ENCODE measurements at regions of chr12 and their contacts with region 1.

Region 1: DNA sequence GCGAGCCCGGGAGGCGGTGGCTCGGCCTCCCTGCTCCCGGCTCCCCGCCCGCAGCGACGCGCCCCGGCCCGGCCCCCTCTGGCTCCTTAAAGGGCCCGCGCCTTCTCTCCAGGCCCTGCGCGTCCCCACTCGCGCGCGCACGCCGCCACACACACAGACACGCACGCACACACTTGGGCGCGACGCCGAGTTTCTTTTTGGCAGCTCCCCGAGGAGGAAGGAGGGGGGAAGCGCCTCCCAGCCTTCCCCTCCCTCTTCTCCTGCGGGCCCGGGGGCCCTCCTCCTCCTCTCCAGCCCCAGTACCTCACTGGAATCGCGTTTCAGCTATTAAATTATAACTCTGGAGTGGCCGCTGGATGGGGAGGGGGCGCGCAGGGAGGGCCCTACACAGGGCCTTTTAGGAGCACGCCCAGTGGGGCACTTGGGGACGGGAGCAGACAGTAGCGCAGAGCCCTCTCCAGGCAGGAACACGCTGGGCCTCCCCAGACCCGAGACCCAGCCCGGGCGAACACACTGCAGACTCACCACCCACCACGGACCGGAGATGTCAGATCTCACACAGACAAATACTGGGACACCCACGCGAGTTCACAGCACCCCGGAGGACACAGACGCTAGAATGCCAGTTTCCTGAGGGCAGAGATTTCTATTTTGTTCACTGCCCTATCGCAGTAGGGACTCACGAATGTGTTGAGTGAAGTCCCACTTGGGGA is 405 bp upstream of the NCOR2 start:
- DNase-seq: peak; percentile 84 to 95 (median 94)
- ATAC-seq: peak; percentile 86
- H3K4me3 ChIP-seq: peak overlapping the region; percentile 42
- H3K27ac ChIP-seq: peak overlapping the region; percentile 69
- H3K4me1 ChIP-seq: peaks cover 13 to 54% of the 10 kb centered on the region in 2 experiments
- H3K27me3 ChIP-seq: no peaks in the 10 kb centered on the region
- CTCF ChIP-seq: 0 out of 6 replicates have a peak, but pooled peaks of 1 of the 3 experiments have one; percentile 9
- EP300 ChIP-seq: no peak
- POLR2A ChIP-seq: no peak
- RAD21 ChIP-seq: peak in 1 of 2 experiments; percentile 30; a peak in 1 of 4 replicates

Region 2: DNA sequence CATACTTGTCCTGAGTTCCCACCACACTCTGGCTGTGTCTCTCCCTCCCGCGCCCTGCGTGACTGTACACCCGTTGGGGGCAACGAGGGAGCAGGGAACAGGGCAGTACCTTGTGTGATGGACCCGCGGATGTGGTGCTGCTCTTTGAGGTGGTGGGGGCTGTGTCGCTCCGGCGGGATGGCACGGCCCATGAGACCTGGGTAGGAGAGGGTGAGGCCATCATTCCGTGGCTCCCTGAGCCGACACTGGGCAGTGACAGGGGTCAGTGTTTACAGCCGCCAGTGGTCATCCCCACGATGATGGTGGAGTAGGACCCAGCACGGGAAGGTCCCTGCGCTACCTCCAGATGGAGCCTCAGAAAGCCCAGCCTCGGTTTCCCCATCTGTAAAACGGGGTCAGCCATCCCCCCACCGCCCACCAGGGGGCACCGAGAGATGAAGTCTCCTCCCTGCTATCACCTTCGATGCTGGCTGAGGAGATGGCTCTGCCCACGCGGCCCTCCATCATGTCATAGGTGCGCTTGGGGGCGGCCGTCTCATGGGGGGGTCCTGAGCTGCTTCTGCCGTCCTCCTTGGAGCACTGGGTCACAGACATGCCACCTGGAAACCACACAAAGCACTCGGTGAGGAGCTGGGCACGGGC is 220.0 kb before region 1 on chr12:
- CTCF ChIA-PET with region 1: no interaction called
- POLR2A ChIA-PET with region 1: no interaction called
- in situ Hi-C with region 1: no loop called
- intact Hi-C with region 1: no loop called
- DNase-seq: peak; percentile 12 to 51 (median 41)
- ATAC-seq: peak; percentile 32; the same call in 2 of the 3 replicates
- H3K4me3 ChIP-seq: no peak overlapping the region
- H3K27ac ChIP-seq: no peak overlapping the region
- H3K4me1 ChIP-seq: peaks cover 3 to 4% of the 10 kb centered on the region in 2 experiments
- H3K27me3 ChIP-seq: no peaks in the 10 kb centered on the region
- CTCF ChIP-seq: peak; percentile 52 to 71 (median 53)
- EP300 ChIP-seq: no peak
- POLR2A ChIP-seq: no peak
- RAD21 ChIP-seq: peak in 1 of 2 experiments; percentile 59; a peak in 2 of 4 replicates

Region 3: GRCh38 chr12:124493809-124494750 is 73.7 kb before region 1 on chr12:
- CTCF ChIA-PET with region 1: no interaction called
- POLR2A ChIA-PET with region 1: no interaction called
- in situ Hi-C with region 1: no loop called
- intact Hi-C with region 1: loop called (anchors 5 kb)
- DNase-seq: peak in 1 of 4 experiments; percentile 20
- ATAC-seq: no peak
- H3K4me3 ChIP-seq: no peak overlapping the region
- H3K27ac ChIP-seq: no peak overlapping the region
- H3K4me1 ChIP-seq: peaks cover 29 to 70% of the 10 kb centered on the region in 2 experiments
- H3K27me3 ChIP-seq: no peaks in the 10 kb centered on the region
- CTCF ChIP-seq: no peak
- EP300 ChIP-seq: no peak
- POLR2A ChIP-seq: no peak
- RAD21 ChIP-seq: no peak

Region 4: DNA sequence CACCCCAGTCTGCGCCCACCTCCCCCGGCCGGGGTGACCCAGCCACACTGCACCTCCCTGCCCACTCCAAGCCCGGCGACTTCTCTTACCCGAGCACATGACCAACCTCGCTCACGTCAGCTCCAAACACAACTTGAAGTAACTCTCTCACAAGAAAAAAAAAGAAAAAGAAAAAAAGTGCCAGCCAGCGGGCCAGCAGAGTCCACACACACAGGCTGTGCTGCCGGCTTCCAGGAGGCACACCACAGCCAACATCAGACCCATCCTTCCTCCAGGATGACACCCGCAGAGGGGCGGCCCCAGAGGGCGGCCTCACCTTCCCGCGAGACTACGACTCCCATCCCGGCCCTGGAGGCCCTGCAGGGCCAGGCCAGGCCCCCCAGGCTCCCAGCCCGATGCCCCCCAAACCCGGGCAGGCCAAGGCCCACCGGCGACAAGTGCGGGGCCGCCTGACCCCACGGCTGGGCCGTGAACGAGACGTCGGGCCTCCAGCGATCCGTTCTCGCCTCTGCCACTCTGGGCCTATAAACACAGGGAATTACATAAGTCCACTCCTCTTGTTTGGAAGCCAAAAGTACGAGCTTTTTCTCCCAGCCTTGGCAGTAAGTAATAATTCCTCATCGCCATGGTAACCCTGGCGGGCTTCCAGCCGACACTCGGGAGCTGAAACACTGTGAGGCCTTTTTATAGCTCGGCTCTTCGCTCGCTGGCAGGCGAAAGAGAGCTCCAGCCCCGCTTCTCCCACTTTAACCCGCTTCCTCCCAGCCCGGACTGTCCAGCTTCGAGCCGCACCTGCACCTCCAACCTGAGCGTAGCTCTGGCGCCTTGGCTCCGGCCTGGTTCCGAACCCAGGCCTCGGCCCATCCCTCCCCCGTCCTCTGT is 49.5 kb before region 1 on chr12:
- CTCF ChIA-PET with region 1: no interaction called
- POLR2A ChIA-PET with region 1: no interaction called
- in situ Hi-C with region 1: no loop called
- intact Hi-C with region 1: no loop called
- DNase-seq: peak in 1 of 4 experiments; percentile 57
- ATAC-seq: peak; percentile 44
- H3K4me3 ChIP-seq: no peak overlapping the region
- H3K27ac ChIP-seq: peak overlapping the region; percentile 59; the same call in 2 of the 3 replicates
- H3K4me1 ChIP-seq: peaks cover 19 to 58% of the 10 kb centered on the region in 2 experiments
- H3K27me3 ChIP-seq: no peaks in the 10 kb centered on the region
- CTCF ChIP-seq: no peak
- EP300 ChIP-seq: no peak
- POLR2A ChIP-seq: no peak
- RAD21 ChIP-seq: no peak

Region 5: DNA sequence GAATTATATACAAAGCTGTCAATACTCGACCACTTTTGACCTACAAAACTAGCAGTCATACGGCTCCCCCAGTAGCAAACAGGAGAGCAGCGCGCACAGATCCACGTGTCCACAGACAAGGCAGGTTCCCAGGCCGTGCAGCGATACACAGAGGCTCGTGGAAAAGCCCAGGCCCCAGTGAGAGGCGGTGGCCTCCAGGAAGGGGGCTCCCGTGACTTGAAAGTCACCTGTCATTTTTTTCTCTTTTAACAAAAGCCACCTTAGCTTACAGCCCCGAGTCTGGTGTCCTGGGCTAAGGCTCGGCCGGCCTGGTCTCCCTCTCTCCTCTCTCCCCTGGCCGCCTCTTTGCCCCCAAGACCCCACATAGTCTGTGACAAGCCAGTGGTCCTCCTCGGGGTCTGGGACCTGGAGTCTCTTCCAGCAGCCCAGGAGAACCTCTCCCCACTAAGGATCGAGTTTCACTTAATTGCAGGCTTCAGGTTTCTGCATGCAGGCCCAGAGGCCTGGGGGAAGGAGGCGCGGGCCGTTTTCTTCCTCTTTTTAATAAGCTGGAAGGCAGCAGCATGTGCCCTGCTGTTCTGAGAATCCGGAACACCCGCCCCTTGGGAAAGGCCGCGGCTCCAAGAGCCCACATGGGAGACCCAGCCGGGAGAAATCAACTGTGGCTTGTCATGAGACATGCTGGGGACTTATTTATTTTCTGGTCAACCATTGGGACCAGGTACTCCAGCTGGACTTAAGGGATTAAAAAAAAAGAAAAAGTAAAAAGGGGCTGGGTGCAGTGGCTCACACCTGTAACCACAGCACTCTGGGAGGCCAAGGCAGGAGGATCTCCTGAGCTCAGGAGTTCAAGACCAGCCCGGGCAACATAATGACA is 16.3 kb before region 1 on chr12:
- CTCF ChIA-PET with region 1: no interaction called
- POLR2A ChIA-PET with region 1: interaction called, 15 read pairs
- in situ Hi-C with region 1: no loop called
- intact Hi-C with region 1: no loop called
- DNase-seq: peak in 2 of 4 experiments; percentile 54 to 79
- ATAC-seq: peak; percentile 79
- H3K4me3 ChIP-seq: no peak overlapping the region
- H3K27ac ChIP-seq: peak overlapping the region; percentile 67
- H3K4me1 ChIP-seq: peaks cover 40 to 69% of the 10 kb centered on the region in 2 experiments
- H3K27me3 ChIP-seq: no peaks in the 10 kb centered on the region
- CTCF ChIP-seq: no peak
- EP300 ChIP-seq: no peak
- POLR2A ChIP-seq: no peak
- RAD21 ChIP-seq: no peak

Region 6: DNA sequence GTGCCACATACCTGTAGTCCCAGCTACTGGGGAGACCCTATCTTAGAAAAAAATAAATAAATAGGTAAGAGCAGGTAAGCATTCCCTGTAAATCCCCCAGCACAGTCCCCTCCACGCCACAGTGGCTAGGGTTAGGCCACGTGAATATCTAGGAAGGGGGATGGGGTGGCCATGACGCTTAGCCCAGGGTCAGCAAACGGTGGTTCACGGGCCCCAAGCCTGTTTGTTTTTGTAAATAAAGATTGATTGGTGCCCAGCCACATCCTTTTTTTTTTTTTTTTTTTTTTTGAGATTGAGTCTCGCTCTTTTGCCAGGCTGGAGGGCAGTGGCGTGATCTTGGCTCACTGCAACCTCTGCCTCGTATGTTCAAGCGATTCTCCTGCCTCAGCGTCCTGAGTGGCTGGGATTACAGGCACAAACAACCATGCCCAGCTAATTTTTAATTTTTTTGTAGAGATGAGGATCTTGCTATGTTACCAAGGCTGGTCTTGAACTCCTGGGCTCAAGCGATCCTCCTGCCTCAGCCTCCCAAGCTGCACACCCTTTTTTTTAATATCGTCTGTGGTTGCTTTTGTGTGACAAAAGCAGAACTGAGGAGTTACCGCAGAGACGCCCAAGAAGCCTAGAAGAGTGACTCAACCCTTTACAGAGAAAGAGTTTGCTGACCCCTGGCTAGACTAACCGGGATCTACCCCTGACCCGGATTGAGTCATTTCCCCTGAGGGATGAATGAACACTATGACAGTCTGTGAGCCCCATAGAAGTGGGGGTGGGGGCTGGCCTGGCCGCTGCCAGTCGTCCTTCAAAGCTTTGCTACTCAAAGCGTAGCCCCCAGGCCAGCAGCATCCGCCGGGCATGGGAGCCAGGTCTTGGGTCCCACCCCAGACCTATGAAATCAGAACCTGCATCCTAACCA is 113.3 kb after region 1 on chr12:
- CTCF ChIA-PET with region 1: interaction called, 9 read pairs
- POLR2A ChIA-PET with region 1: interaction called, 3 read pairs
- in situ Hi-C with region 1: no loop called
- intact Hi-C with region 1: loop called (anchors 2 kb)
- DNase-seq: peak; percentile 63 to 79 (median 70)
- ATAC-seq: peak; percentile 94
- H3K4me3 ChIP-seq: no peak overlapping the region
- H3K27ac ChIP-seq: no peak overlapping the region
- H3K4me1 ChIP-seq: peaks cover 20 to 48% of the 10 kb centered on the region in 2 experiments
- H3K27me3 ChIP-seq: peaks cover 0 to 19% of the 10 kb centered on the region in 2 experiments; a peak in 1 of 5 replicates
- CTCF ChIP-seq: peak; percentile 69 to 78 (median 71)
- EP300 ChIP-seq: 0 out of 2 replicates have a peak, but pooled peaks have one; percentile 11
- POLR2A ChIP-seq: no peak
- RAD21 ChIP-seq: peak; percentile 83 to 88

Region 7: DNA sequence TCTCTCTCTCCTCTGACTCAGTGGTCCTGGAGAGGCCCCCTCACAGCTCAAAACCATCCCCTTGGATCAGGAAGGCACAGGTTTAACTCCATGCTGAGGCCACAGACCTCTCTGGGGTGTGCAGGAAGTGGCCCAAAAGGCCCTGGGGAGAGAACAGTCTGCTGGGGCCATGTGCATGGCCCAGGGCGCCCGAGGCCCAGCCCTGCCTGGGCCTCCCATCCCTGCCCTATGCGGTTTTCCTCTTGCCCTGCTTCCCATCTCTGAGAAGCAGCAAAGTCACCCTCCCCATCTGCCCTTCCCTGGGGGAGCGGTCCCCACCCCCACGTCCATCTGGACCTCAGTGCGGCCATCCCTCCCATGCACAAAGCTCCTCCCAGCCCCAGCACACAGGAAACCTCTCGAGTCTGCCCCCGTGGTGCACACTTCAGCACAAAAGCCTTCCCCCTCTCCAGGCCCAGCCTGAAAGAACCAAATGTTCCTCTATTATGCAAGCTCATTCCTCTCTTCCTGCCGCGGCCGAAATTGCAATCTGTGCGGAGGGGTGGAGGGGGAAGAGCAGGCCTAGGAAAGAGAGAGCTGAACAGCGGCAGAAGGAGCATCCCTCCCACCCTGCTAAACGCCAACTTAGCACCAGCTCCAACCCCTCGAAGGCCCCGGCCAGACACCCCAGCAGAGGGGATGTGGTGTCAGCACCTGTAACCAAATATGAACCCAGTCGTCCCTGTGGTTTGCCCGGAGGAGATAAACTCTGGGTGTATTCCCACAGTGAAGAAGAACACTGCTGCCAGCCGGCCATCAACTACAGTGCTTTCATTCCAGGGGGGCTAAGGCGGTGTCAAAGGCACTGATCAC is 187.4 kb after region 1 on chr12:
- CTCF ChIA-PET with region 1: no interaction called
- POLR2A ChIA-PET with region 1: no interaction called
- in situ Hi-C with region 1: no loop called
- intact Hi-C with region 1: loop called (anchors 5 kb)
- DNase-seq: no peak
- ATAC-seq: peak; percentile 22; the same call in 2 of the 3 replicates
- H3K4me3 ChIP-seq: no peak overlapping the region
- H3K27ac ChIP-seq: no peak overlapping the region
- H3K4me1 ChIP-seq: peaks cover 0 to 10% of the 10 kb centered on the region in 2 experiments; a peak in 1 of 5 replicates
- H3K27me3 ChIP-seq: peaks cover 61 to 91% of the 10 kb centered on the region in 2 experiments
- CTCF ChIP-seq: no peak
- EP300 ChIP-seq: no peak
- POLR2A ChIP-seq: no peak
- RAD21 ChIP-seq: no peak

Region 8: GRCh38 chr12:124852329-124852831 is 284.6 kb after region 1 on chr12:
- CTCF ChIA-PET with region 1: no interaction called
- POLR2A ChIA-PET with region 1: no interaction called
- in situ Hi-C with region 1: no loop called
- intact Hi-C with region 1: no loop called
- DNase-seq: no peak
- ATAC-seq: no peak
- H3K4me3 ChIP-seq: no peak overlapping the region
- H3K27ac ChIP-seq: no peak overlapping the region
- H3K4me1 ChIP-seq: peaks cover 13 to 31% of the 10 kb centered on the region in 2 experiments
- H3K27me3 ChIP-seq: no peaks in the 10 kb centered on the region
- CTCF ChIP-seq: no peak
- EP300 ChIP-seq: no peak
- POLR2A ChIP-seq: no peak
- RAD21 ChIP-seq: no peak

Region 9: DNA sequence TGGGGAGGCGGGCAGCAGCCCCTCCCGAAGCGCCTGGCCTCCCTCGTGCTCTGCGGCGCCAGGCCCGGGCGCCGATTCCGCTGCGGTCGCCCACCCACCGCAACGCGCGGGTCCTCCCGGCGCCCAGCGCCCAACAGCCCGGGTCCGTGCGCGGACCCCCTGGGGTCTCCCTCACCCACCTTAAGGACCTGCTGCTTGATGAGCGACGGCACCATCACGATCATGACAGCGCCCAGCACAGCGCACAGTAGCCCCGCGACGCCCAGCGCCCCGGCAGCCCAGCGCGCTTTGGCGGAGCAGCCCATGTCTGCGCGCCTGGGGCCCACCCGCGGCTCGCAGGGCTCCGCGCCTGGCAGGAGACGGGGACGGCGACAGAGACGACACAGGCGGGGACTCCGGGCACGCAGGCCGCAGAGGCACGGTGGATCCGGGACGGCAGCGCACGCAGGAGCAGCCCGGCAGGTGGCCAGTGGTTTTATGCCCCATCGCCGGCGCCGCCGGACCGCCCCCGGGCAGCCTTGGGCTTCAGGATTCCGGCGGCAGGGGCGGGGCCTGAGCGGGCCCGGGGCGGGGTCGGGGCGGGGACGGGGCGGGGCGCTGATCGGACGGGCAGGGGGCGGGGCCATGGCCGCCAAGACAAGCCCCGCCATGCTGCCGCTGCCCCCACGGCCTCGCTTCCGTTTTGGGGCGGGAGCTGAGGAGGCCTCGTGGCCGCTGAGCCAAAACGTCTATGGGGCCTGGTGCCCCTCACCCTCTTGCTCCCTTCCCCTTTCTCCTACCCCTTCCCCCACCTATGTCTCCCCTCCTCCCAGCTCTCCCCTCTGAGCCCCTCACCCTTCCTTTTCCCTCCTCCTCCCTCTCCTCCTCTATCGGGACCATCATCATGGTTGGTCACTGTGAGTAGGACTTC is 295.9 kb after region 1 on chr12 and contains the start of gene SCARB1:
- CTCF ChIA-PET with region 1: no interaction called
- POLR2A ChIA-PET with region 1: no interaction called
- in situ Hi-C with region 1: no loop called
- intact Hi-C with region 1: no loop called
- DNase-seq: peak; percentile 86 to 99 (median 98)
- ATAC-seq: peak; percentile 84
- H3K4me3 ChIP-seq: peak within 1 kb of the TSS; percentile 80
- H3K27ac ChIP-seq: peak within 1 kb of the TSS; percentile 94
- H3K4me1 ChIP-seq: peaks cover 48 to 50% of the 10 kb centered on the region in 2 experiments
- H3K27me3 ChIP-seq: no peaks in the 10 kb centered on the region
- CTCF ChIP-seq: no peak; a peak in 1 of 6 replicates
- EP300 ChIP-seq: no peak
- POLR2A ChIP-seq: peak; percentile 85
- RAD21 ChIP-seq: peak in 1 of 2 experiments; percentile 23; a peak in 2 of 4 replicates
- polyA plus RNA-seq, gene SCARB1: 0.56 to 4.7 TPM